ENCODE measurements at regions of chr1 and their contacts with region 1.

Region 1: GRCh38 chr1:212738330-212738729 is 38.7 kb upstream of the BATF3 start:
- DNase-seq: no peak
- H3K4me3 Mint-ChIP-seq: no peak overlapping the region
- H3K27ac Mint-ChIP-seq: peak overlapping the region; percentile 89
- H3K4me1 Mint-ChIP-seq: peaks cover 33% of the 10 kb centered on the region
- H3K27me3 Mint-ChIP-seq: no peaks in the 10 kb centered on the region

Region 2: DNA sequence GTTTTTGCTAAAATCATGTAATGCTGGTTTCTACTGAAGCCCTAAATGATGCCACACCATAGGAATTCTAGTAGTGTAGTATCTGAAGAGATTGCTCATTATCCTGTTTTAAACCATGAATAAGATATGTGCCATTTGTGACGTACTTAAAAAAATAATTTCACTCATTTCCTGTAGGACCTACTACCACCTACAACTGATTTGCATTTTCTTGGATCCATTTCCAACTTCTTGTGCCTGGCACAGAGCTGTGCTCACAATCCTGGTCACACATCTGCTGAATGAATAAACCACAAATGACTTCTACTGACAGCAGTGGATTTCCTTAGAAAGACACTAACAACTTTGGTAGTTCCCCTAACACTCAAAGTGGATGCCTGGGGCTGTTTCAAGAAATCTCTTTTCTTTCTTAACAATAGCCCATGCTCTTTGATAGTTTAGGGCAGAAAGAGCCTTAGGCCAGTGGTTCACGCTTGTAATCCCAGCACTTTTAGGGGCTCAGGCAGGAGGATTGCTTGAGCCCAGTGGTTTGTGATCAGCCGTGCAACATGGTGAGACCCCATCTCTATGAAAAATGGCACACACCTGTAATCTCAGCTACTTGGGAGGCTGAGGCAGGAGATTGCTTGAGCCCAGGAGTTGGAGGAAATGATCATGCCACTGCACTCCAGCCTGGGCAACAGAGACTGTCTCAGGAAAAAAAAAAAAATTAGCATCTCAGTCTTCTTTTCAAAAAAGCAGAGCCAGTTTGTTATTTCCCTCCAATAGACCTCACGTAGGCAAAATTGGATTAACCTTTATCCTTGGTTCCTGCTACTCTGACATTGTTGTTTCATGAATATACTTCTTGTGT is 25.7 kb before region 1 on chr1:
- CTCF ChIA-PET with region 1: no interaction called
- POLR2A ChIA-PET with region 1: no interaction called
- intact Hi-C with region 1: loop called (anchors 1 kb)
- DNase-seq: peak; percentile 61
- H3K4me3 Mint-ChIP-seq: no peak overlapping the region
- H3K27ac Mint-ChIP-seq: peak overlapping the region; percentile 95
- H3K4me1 Mint-ChIP-seq: peaks cover 47% of the 10 kb centered on the region
- H3K27me3 Mint-ChIP-seq: no peaks in the 10 kb centered on the region

Region 3: GRCh38 chr1:212721388-212722247 is 16.7 kb before region 1 on chr1:
- CTCF ChIA-PET with region 1: interaction called, 7 read pairs
- POLR2A ChIA-PET with region 1: interaction called, 3 read pairs
- intact Hi-C with region 1: loop called (anchors 1 kb)
- DNase-seq: peak; percentile 77
- H3K4me3 Mint-ChIP-seq: peak overlapping the region; percentile 63
- H3K27ac Mint-ChIP-seq: peak overlapping the region; percentile 94
- H3K4me1 Mint-ChIP-seq: peaks cover 58% of the 10 kb centered on the region
- H3K27me3 Mint-ChIP-seq: peaks cover 3% of the 10 kb centered on the region

Region 4: DNA sequence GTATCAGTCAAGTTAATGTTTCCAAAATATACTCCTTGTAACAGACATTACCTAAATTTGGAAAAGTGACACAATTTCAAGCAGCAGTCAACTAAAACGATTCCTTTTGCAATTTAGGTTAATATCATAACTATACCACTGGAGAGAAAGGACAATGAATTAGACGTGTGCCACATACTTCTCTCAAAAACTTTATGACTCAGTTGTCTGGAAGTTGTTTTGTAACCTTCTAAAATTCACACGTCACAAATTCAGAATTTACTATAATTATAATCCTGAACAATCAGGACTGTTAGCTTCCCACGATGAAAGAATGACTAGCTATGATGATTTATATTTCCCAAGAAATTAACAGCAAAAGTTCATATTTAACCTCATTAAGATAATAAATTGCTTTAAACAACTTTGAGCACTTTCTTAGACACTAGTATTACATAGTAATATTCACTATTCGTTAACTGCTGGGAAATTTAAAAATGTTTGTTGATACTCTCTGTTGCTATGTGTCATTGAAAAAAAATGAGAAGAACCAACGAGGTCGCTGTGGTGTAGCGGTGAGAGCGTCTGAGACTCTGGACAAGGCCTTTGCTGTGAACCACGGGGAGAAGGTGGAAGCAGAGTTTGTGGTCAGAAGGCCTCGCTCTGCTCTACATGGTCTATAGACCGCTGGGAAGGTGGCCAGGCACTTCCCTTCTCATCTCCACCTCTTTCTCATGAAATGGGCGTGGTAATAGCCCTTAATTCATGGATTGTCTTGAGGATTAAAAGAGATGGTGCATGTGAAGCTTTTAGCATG is 10.7 kb before region 1 on chr1:
- CTCF ChIA-PET with region 1: interaction called, 7 read pairs
- POLR2A ChIA-PET with region 1: interaction called, 6 read pairs
- intact Hi-C with region 1: loop called (anchors 1 kb)
- DNase-seq: peak; percentile 66
- H3K4me3 Mint-ChIP-seq: peak overlapping the region; percentile 13
- H3K27ac Mint-ChIP-seq: peak overlapping the region; percentile 92
- H3K4me1 Mint-ChIP-seq: peaks cover 66% of the 10 kb centered on the region
- H3K27me3 Mint-ChIP-seq: no peaks in the 10 kb centered on the region

Measured in activated CD4-positive, alpha-beta memory T cell treated with anti-CD3 and anti-CD28 coated beads for 36 hours (primary cell).